PC-3 (cell line): ENCODE measurements at regions of chr1 and their contacts with region 1.

Region 1: DNA sequence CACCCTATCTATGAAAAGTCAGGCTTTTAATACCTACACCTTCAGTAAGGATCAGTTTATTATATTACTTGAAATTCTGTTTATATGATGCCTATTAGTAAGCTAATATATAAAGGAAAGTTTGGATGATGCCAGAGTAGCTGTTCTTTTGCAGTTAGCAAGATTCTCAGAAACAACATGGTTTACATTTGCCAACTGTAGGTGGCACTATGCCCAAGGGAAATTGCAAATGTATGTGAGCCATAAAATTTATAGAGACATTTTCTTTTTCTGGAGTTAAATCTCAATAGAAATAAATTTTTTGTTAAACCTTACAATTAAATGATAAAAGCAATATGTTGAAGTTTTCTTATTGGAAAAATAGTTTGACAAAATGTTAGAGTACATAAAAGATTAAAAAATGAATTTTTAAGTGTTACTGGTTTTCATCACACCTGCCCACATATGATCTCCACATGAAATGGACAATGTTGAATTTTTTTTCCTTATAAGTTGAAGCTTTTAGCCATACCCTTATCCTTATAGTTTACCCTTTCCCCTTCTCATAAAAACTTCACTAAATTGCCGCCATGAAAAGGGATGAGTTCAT is 32.1 kb upstream of the EPHX4 start:
- DNase-seq: peak; percentile 76
- ATAC-seq: peak; percentile 51; the same call in 1 of the 2 replicates
- H3K4me3 ChIP-seq: no peak overlapping the region
- H3K27ac ChIP-seq: no peak overlapping the region
- H3K4me1 ChIP-seq: no peaks in the 10 kb centered on the region
- H3K27me3 ChIP-seq: no peaks in the 10 kb centered on the region
- CTCF ChIP-seq: peak; percentile 83

Region 2: DNA sequence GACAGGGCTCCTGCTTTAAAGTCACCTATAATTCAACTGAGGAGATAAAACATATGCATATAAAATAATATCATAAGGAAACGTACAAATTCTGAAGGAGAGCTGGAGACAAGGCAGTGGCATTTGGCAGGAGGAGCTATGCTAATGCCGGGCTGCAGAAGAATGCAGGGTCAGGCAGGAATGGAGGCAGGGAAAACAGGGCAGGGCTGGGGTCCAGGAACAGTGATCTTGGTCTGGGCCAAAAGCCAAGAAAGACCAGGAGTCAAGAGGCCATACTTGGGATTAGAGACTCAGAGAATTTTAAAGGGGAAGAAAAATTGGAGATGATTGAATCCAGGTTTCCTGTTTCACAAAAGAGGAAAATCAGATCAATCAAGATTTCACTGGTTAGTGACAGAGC is 68.5 kb before region 1 on chr1:
- CTCF ChIA-PET with region 1: no interaction called
- POLR2A ChIA-PET with region 1: no interaction called
- intact Hi-C with region 1: no loop called
- DNase-seq: no peak
- ATAC-seq: no peak
- H3K4me3 ChIP-seq: no peak overlapping the region
- H3K27ac ChIP-seq: no peak overlapping the region
- H3K4me1 ChIP-seq: no peaks in the 10 kb centered on the region; the same call in 1 of the 2 replicates
- H3K27me3 ChIP-seq: no peaks in the 10 kb centered on the region
- CTCF ChIP-seq: no peak

Region 3: GRCh38 chr1:92623187-92623778 is 625.6 kb after region 1 on chr1:
- CTCF ChIA-PET with region 1: no interaction called
- POLR2A ChIA-PET with region 1: no interaction called
- intact Hi-C with region 1: loop called (anchors 5 kb)
- DNase-seq: peak; percentile 45
- ATAC-seq: peak; percentile 64
- H3K4me3 ChIP-seq: no peak overlapping the region
- H3K27ac ChIP-seq: no peak overlapping the region
- H3K4me1 ChIP-seq: no peaks in the 10 kb centered on the region
- H3K27me3 ChIP-seq: no peaks in the 10 kb centered on the region
- CTCF ChIP-seq: peak; percentile 67